Posterior vena cava (tissue), 2 donors: ENCODE measurements at regions of chr3 and their contacts with region 1.

Region 1: DNA sequence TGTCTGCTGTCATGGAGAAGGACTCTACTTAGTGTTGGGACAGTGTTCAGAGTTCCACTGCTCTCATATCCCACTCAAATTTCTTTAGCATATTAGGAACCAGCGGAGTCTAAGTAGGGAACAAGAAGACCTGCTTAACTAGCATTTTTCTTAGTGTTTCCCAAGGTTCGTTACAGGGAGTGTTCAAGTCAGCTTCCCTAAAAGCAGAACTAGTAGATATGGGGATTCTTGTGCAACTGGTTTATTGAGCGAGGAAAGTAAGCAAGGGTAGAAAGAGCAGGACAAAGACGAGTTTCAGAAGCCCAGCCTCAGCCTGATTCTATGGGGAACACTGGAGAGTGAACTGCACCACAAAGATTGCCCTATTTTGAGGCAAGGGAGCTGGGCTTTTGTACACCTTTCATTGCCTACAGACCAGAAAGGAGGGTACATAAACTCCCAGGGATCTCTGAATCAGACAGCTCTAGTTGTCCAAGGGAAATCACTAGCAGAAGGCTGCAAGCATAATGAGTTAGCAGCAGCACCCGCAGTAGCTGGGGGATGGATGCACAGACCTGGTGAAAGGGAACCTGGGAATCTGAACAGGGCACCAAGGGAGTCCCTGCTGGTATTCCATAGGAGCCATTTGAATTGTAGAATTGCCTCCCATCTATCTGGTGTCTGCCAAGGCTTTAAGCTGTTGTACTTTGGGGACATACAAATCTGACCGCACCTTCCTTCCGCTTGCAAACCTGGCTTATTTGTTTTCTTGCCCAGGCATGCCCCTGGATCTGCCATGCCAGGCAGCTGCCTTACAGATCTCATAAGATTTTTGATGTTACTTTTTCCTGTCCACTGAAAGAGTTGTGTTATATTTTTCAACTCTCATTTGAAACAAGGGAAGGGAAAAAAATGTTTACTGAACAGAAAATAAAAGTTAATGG is 15.1 kb downstream of the CMTM7 start:
- DNase-seq: no peak

Region 2: DNA sequence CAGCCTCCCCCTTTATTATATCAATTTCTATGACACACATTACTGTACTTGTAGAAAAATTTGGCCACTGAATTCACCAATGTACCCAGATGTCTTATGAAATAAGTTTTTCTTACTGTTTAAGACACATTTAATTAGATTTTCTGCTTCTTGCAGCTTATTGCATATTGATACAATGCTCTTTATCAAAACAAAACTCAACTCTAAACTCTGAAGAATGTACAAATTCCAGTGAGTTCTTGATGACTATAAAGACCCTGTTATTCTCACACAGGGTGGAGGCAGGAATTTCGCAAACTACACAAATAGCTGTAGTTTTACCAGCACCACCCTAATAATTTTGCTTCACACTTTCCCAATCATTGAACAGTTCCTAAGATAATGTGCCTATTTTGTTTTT is 73.9 kb after region 1 on chr3:
- intact Hi-C with region 1: loop called in 1 of 2 experiments (anchors 2 kb)
- DNase-seq: no peak

Region 3: DNA sequence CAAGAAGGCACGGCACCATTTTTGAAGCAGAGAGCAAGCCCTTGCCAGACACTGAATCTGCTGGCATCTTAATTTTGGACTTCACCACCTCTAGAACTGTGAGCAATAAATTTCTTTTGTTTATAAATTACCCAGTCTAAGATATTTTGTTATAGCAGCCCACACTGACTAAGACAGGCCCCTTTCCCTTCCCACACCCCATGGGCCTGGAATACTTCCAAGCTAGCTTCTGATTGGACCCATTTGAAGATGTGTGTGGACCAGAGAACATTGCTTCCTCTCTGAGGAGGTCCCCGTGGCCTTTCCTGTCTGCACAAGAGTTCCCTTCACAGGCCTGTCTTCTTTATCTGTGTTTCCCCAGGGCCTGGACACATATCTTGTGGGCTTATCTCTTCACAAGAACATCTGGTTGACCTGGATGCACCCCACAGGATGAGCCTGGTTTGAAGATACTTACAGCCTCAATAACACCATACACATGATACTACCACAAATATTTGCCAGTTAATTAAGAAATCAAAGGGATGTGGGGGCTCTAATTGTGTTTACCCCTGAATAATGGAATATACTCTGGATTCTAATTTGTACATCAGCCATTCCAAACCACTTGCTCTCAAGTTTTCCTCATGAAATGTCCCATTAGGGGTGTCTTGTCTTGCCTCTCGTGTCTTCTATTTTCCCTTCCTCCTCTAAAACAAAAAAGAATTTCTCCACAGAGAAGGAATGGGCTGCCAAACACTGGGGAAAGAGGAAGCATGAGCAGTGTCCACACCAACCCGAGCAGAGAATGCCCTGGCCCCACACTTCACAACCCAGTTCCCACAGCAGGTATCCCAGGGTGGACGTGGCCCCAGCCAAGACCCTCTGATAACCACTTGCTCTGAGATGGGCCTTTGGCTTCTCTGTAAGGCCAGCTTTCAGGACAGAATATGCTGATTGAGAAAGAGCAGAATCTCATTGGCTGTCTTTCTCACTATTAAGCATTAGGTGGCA is 647.6 kb after region 1 on chr3:
- intact Hi-C with region 1: no loop called
- DNase-seq: no peak